ENCODE measurements at regions of chr21 and their contacts with region 1.

Region 1: DNA sequence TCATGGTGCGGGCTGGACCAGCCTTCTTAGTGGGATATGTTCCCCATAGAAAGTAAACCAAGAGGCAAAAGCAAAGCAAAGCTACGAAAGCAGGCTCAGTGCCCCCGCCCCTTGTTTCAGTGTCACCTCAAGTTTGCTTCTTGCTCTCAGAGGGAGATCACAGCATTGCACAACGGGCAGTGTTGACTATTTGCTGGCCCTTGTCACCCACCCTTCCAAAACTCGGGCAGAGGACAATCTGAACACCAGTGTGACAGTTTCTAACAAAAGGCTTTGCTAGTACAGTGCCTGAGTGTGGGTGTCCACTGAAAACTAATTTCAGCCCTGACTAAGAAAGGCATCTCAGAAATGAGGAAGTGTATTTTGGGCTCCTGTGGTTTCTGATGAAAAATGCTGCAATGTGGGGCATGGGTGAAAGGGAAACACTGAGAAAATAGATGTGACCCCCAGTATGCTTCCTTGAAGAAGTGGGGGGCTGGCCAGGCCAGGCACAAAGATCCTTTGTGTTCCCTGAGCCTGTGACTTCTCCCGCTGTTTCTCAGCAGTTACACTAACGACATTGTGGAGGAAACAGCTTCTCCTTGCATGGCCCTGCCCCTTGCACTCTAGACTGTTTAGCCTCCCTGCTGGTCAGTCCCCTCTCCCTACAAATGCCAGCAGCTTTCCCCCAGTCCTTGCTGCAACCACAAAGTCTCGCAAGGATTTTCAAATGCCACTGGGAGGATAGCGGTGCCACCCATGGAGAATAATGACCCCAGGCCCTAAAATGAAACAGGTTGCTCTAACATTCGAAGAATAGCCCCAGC is 33.3 kb upstream of the KCNE1 start:
- DNase-seq: peak; percentile 39
- H3K4me3 ChIP-seq: no peak overlapping the region
- H3K27ac ChIP-seq: no peak overlapping the region
- H3K4me1 ChIP-seq: no peaks in the 10 kb centered on the region
- H3K27me3 ChIP-seq: no peaks in the 10 kb centered on the region
- CTCF ChIP-seq: no peak
- POLR2A ChIP-seq: no peak

Region 2: DNA sequence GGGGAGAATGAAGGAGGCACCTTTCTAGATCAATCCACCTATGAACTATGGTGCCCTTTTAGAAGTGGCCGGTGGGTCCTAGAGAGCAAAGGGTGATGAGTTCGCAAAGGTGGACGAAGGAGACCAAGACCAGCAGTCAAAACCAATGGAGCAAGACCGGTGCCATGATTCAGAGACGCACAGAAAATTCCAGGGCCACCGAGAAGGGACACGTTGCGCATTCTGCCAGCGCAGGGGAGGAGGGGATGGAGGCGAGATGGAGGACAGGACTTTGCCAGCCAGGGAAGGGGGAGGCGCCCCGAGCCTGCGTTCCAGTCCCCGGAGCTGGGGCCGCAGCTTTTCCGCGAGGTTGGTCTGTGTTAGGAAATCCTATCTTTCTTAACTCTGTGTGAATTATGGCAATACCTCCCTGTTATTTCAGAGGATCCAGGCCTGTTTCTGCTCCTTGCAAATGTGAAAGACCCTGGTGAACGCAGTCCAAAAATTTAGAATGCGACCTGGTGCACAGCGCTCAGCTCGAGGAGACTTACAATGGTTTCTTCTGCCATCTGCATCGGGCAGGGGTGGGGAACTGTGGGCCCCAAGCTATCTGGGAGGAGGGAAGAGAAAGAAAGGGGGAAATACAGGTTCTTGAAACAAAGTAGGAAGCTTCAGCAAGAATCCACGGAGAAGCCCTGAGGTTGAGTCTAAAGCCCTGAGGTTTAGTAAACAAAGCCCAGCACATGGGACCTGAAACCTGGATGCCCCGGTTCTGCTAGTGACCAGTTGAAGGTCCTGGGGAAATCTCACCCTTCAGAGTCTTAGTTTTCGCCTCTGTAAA is 342.5 kb before region 1 on chr21:
- CTCF ChIA-PET with region 1: no interaction called
- POLR2A ChIA-PET with region 1: no interaction called
- dilution Hi-C with region 1: no loop called
- intact Hi-C with region 1: no loop called
- DNase-seq: no peak
- H3K4me3 ChIP-seq: peak overlapping the region in 1 of 3 experiments; percentile 46
- H3K27ac ChIP-seq: no peak overlapping the region
- H3K4me1 ChIP-seq: peaks cover 6% of the 10 kb centered on the region
- H3K27me3 ChIP-seq: peaks cover 0 to 7% of the 10 kb centered on the region in 2 experiments
- CTCF ChIP-seq: no peak
- POLR2A ChIP-seq: no peak

Region 3: GRCh38 chr21:34517491-34518245 is 27.6 kb before region 1 on chr21:
- CTCF ChIA-PET with region 1: interaction called, 77 read pairs
- POLR2A ChIA-PET with region 1: no interaction called
- dilution Hi-C with region 1: no loop called
- intact Hi-C with region 1: no loop called
- DNase-seq: peak; percentile 22
- H3K4me3 ChIP-seq: no peak overlapping the region
- H3K27ac ChIP-seq: no peak overlapping the region
- H3K4me1 ChIP-seq: no peaks in the 10 kb centered on the region
- H3K27me3 ChIP-seq: no peaks in the 10 kb centered on the region
- CTCF ChIP-seq: peak; percentile 14
- POLR2A ChIP-seq: no peak

Region 4: GRCh38 chr21:34526618-34527290 is 18.5 kb before region 1 on chr21:
- CTCF ChIA-PET with region 1: interaction called, 77 read pairs
- POLR2A ChIA-PET with region 1: interaction called, 7 read pairs
- dilution Hi-C with region 1: no loop called
- intact Hi-C with region 1: loop called (anchors 1 kb)
- DNase-seq: peak; percentile 99
- H3K4me3 ChIP-seq: peak overlapping the region; percentile 41 to 93 (median 76)
- H3K27ac ChIP-seq: peak overlapping the region; percentile 98
- H3K4me1 ChIP-seq: peaks cover 23% of the 10 kb centered on the region
- H3K27me3 ChIP-seq: no peaks in the 10 kb centered on the region
- CTCF ChIP-seq: no peak
- POLR2A ChIP-seq: peak; percentile 97

Region 5: DNA sequence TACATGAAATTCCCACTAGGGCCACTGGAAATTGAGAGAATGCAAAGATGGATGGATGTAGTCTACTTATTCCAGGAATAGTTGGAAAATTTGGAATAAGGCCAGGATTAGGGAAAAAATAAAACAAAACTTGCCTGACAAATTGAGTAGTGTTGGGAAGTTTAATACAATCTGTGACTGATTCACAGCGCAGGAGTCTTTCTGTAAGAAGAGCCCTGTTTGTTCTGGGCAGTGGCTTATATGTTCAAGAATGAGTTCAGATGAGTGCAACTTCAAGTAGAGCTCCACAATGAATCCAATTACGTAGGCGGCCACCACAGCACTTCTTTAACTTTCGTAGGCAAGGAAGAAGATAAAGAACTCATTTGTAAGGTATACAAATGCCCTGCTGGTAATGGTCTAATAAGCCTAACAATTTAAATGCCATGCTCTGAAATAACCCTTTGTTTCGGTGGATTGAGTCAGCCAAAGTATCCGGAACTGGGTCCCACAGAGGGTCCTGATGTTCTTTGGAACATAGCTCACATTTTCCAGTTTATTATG is 13.9 kb after region 1 on chr21:
- CTCF ChIA-PET with region 1: interaction called, 35 read pairs
- POLR2A ChIA-PET with region 1: no interaction called
- dilution Hi-C with region 1: no loop called
- intact Hi-C with region 1: no loop called
- DNase-seq: no peak
- H3K4me3 ChIP-seq: no peak overlapping the region
- H3K27ac ChIP-seq: no peak overlapping the region
- H3K4me1 ChIP-seq: peaks cover 1% of the 10 kb centered on the region
- H3K27me3 ChIP-seq: no peaks in the 10 kb centered on the region
- CTCF ChIP-seq: no peak
- POLR2A ChIP-seq: no peak

Measured in endothelial cell of umbilical vein (primary cell).